Activated T-helper 2 cell treated with anti-CD3 and anti-CD28 coated beads, Interferon-gamma antibody, Interleukin-2, Interleukin-4, amounts not matched to agents 10 μg/mL and 5 μg/mL and 100 μg/mL, durations not matched to agents 14 hours and 24 hours and 36 hours (primary cell): ENCODE measurements at regions of chr9 and their contacts with region 1.

Region 1: GRCh38 chr9:98101868-98102273 is 17.2 kb downstream of the TRIM14 start:
- DNase-seq: peak; percentile 84
- H3K4me3 Mint-ChIP-seq: peak overlapping the region; percentile 74
- H3K27ac Mint-ChIP-seq: peak overlapping the region; percentile 97
- H3K4me1 Mint-ChIP-seq: peaks cover 67% of the 10 kb centered on the region
- H3K27me3 Mint-ChIP-seq: no peaks in the 10 kb centered on the region

Region 2: DNA sequence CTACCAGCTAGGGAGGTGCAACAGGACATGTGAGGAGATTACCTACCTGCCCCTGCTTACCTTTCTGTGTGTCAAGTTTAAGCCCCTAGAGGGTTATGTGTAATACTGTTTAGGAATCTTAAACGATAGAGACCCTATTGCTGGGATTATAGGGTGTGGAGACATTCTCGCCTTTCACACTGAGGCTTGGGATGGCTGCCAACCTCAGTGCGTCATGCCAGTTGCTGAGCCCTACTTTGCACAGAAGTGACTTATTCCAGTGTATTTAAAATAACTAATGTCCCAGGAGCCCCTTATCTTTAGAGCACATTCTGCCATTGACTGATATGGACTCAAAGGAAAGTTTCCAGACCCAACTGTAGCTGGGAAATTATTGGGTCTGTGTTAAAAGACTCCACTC is 328.1 kb before region 1 on chr9:
- intact Hi-C with region 1: no loop called
- DNase-seq: no peak
- H3K4me3 Mint-ChIP-seq: no peak overlapping the region
- H3K27ac Mint-ChIP-seq: no peak overlapping the region
- H3K4me1 Mint-ChIP-seq: no peaks in the 10 kb centered on the region
- H3K27me3 Mint-ChIP-seq: peaks cover 26% of the 10 kb centered on the region

Region 3: GRCh38 chr9:97982683-97983588 is 118.9 kb before region 1 on chr9 and contains the start of gene ANP32B:
- intact Hi-C with region 1: loop called (anchors 5 kb)
- DNase-seq: peak; percentile 93
- H3K4me3 Mint-ChIP-seq: peak within 1 kb of the TSS; percentile 84
- H3K27ac Mint-ChIP-seq: peak within 1 kb of the TSS; percentile 80
- H3K4me1 Mint-ChIP-seq: peaks cover 27% of the 10 kb centered on the region
- H3K27me3 Mint-ChIP-seq: no peaks in the 10 kb centered on the region
- total RNA-seq, gene ANP32B: 307 and 323 TPM in 2 replicates

Region 4: DNA sequence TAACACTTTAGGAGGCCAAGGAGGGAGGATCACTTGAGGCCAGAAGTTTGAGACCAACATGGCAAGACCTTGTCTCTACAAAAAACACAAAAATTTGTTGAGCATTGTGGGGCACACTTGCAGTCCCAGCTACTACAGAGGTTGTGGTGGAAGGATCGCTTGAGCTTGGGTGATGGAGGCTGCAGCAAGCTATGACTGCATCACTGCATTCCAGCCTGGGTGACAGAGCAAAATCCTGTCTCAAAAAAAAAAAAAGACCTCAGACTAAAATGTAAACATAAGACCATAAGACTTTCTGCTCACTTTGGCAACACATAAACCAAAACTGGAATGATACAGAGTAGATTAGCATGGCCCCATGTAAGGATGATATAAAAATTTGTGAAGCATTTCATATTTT is 69.9 kb before region 1 on chr9:
- intact Hi-C with region 1: no loop called
- DNase-seq: no peak
- H3K4me3 Mint-ChIP-seq: no peak overlapping the region
- H3K27ac Mint-ChIP-seq: no peak overlapping the region
- H3K4me1 Mint-ChIP-seq: peaks cover 7% of the 10 kb centered on the region
- H3K27me3 Mint-ChIP-seq: no peaks in the 10 kb centered on the region

Region 5: DNA sequence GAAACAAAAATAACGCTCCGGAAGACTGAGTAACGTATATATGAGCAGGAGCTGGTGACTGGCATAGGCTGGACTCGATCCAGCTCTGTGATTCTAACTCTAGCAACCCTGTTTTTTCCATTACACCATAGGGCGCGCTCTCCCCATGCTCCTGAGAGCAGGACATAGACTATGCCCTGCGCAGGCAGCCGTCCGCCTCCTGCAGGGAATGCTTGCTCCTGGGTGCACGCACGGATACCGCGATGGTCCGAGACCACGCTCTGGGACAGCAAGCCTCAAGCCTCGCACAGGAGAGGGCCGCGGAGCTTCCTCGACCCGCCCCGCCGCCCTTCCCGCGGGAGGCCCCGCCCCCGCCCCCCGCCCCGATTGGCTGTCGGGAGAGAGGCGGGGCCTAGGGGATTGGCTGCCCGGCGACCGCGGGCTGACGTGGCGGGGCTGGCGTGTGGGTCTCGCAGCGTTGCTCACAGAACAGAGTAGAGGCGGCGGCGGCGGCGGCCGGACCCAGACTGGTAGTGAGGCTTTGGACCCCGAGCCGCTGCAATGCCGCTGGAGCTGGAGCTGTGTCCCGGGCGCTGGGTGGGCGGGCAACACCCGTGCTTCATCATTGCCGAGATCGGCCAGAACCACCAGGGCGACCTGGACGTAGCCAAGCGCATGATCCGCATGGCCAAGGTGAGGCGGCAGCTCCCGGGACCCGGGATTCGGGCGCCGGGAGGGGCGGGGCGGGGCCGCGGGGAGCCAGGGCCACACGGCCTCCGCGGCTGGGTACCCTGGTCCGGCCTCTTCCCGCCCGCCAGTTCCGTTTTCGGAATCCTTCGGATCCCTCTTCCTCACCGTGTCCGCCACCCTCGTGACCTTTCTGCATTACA is 45.4 kb before region 1 on chr9 and contains the start of gene NANS:
- intact Hi-C with region 1: loop called (anchors 5 kb)
- DNase-seq: peak; percentile 89
- H3K4me3 Mint-ChIP-seq: peak within 1 kb of the TSS; percentile 88
- H3K27ac Mint-ChIP-seq: peak within 1 kb of the TSS; percentile 91
- H3K4me1 Mint-ChIP-seq: peaks cover 40% of the 10 kb centered on the region
- H3K27me3 Mint-ChIP-seq: no peaks in the 10 kb centered on the region
- total RNA-seq, gene NANS: 63.4 and 64.7 TPM in 2 replicates

Region 6: GRCh38 chr9:98074115-98074990 is 27.5 kb before region 1 on chr9:
- intact Hi-C with region 1: loop called (anchors 2 kb)
- DNase-seq: peak; percentile 49
- H3K4me3 Mint-ChIP-seq: no peak overlapping the region
- H3K27ac Mint-ChIP-seq: peak overlapping the region; percentile 84
- H3K4me1 Mint-ChIP-seq: peaks cover 18% of the 10 kb centered on the region
- H3K27me3 Mint-ChIP-seq: no peaks in the 10 kb centered on the region

Region 7: DNA sequence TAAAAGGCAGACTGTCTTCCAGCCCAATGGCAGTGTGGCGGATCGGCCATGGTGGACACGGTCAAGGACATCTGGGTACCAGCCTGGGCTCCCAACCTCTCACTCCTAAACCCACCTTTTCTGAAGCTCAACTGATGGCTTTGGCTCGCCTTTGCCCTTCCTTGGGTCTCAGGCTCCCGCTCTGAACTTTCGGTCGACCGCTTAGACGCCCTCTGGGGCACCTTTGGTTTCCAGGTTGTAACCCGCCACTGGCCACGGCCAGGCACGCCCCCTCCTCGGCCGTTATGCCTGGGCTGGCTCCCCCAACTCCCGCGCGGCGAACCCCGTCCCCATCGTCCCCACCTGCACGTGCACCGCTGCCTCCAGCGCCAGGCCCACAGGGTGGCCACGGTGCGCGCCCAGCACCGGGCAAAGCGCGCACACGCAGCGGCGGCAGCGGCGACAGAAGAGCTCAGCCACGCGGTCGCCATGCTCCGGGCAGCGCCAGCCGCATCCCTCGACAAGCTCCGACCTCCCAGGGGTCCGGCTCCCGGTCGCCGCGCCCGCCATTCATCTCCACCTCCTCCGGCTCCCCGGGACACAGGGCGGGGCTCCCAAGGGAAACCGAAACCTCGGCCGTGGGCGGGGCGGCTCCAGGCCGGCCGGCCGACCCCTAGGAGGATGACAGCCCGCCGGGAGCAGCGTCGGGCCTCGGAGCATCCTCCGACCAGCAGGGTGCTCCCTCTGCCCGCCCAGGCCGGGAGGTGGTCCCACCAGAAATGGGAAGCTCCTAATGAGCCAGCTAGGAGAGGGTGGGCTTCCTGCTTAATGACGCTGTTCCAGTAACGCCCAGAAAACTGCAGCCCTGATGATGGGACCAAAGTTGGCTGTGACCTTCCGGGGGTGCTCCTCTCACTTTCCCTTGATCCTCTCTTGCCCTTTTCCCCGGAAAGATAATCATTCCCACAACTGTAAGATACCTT is 17.1 kb after region 1 on chr9 and contains the start of gene TRIM14:
- intact Hi-C with region 1: loop called (anchors 2 kb)
- DNase-seq: peak; percentile 64
- H3K4me3 Mint-ChIP-seq: peak within 1 kb of the TSS; percentile 82
- H3K27ac Mint-ChIP-seq: peak within 1 kb of the TSS; percentile 92
- H3K4me1 Mint-ChIP-seq: peaks cover 37% of the 10 kb centered on the region
- H3K27me3 Mint-ChIP-seq: no peaks in the 10 kb centered on the region
- total RNA-seq, gene TRIM14: 37.7 and 41.5 TPM in 2 replicates

Region 8: DNA sequence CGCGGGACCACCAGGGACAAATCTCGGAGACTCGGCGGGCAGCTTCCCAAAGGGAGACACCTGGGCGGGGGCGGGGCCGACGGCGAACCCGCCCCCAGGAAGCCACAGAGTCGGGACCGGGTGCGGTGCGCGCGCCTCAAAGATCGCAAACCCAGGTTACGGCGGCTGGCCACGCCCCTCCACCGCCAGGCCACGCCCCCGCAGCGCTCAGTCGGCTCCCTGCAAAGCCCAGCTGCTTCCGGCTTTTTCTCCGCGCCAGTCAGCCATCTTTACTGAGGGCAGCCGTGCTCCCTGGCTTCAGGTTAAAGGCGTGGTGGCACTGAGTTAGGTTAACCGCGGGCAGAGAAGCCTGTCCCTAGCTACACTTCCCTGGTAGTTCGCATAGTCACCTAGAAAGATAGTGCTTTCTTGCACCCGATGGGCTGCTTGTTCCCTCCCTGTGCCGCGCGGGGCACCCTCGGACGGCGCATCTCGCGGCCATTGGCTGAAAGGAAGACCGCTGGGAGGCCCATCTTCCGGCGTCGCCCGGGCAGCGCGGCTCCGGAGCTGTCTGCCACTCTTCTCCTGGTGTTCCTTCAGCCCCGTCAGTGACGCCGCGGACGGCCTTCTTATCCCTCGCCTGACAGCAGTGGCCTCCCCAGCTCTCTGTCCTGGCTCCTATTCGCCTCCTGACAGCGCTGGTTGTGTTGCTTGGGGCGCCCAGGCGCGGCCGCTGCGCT is 153.9 kb after region 1 on chr9 and contains the start of gene TBC1D2:
- intact Hi-C with region 1: loop called (anchors 5 kb)
- DNase-seq: peak; percentile 96
- H3K4me3 Mint-ChIP-seq: peak within 1 kb of the TSS; percentile 97
- H3K27ac Mint-ChIP-seq: peak within 1 kb of the TSS; percentile 94
- H3K4me1 Mint-ChIP-seq: peaks cover 23% of the 10 kb centered on the region
- H3K27me3 Mint-ChIP-seq: peaks cover 12% of the 10 kb centered on the region
- total RNA-seq, gene TBC1D2: 1.3 and 1.5 TPM in 2 replicates